Left cardiac atrium (tissue), 4 donors: ENCODE measurements at regions of chr3 and their contacts with region 1.

Region 1: DNA sequence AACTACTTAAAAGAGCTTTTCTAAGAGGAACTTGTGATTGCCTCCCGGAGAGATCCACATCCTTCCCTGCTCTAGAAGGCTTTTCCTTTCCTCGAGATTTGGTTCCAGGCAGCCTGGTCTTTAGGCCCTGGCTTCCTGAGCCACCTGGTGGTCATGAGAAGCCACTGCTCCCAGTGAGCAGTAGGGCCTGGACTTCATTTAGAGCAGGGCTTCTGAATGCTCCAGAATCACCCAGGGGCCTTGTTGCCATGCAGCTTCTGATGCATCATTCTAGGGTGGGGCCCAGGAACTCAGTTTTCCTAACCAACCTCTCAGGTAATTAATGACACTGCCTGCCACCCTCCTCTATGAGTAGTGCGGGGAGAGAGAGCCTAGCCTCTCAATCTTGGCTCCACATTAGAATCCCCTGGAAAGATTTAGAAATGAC is 29.6 kb downstream of the PSMD6 start:
- DNase-seq: peak; percentile 70
- ATAC-seq: peak; percentile 93 to 95

Region 2: GRCh38 chr3:63740116-63740515 is 253.6 kb before region 1 on chr3:
- intact Hi-C with region 1: no loop called
- DNase-seq: no peak
- ATAC-seq: no peak

Region 3: GRCh38 chr3:63918339-63918737 is 75.3 kb before region 1 on chr3:
- intact Hi-C with region 1: loop called in 1 of 2 experiments (anchors 5 kb)
- DNase-seq: no peak
- ATAC-seq: peak in 1 of 2 donors; percentile 50

Region 4: GRCh38 chr3:63961891-63962290 is 31.8 kb before region 1 on chr3:
- intact Hi-C with region 1: loop called in 1 of 2 experiments (anchors 2 kb)
- DNase-seq: no peak
- ATAC-seq: peak in 1 of 2 donors; percentile 50